ENCODE measurements at regions of chr17 and their contacts with region 1.

Region 1: DNA sequence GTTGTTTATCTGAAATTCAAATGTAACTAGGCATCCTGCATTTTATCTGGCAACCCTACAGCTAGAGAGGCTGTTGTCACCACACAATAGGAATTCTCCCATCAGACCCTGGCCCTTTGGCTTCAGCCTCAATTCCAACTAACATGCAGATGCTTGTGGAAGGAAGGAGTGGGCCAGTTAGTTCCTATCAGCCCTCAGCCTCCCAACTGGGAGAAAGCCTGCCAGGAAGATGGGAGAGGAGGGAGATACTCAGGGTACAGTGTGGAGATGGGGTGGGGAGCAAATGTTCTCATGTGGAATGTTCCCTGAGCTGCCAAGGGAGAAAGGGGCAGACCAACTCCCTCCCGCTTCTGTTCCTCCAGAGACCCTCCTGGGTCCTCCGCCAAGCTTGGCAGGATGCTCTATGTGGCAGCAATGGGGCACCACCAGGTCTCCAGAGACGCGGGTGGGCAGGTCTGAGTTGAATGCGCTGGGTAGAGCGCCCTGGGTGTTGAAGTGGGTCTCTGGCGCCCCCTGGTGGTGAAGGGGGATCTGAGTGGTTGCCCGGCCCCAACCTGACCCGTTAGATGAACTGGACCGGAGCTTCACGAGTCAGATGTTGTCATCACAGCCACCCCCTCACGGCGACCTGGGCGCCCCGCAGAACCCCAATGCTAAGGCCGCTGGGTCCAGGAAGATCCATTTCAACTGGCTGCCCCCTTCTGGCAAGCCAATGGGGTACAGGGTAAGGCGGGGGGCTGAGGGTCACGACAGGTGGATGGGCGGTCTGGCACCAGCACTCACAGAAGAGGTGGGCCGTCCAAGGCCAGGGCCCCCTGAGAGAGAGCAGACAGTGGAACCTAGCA is 15.2 kb downstream of the GALK1 start:
- DNase-seq: peak; percentile 76
- H3K4me3 Mint-ChIP-seq: no peak overlapping the region
- H3K27ac Mint-ChIP-seq: no peak overlapping the region
- H3K4me1 Mint-ChIP-seq: peaks cover 10% of the 10 kb centered on the region
- H3K27me3 Mint-ChIP-seq: peaks cover 3% of the 10 kb centered on the region

Region 2: DNA sequence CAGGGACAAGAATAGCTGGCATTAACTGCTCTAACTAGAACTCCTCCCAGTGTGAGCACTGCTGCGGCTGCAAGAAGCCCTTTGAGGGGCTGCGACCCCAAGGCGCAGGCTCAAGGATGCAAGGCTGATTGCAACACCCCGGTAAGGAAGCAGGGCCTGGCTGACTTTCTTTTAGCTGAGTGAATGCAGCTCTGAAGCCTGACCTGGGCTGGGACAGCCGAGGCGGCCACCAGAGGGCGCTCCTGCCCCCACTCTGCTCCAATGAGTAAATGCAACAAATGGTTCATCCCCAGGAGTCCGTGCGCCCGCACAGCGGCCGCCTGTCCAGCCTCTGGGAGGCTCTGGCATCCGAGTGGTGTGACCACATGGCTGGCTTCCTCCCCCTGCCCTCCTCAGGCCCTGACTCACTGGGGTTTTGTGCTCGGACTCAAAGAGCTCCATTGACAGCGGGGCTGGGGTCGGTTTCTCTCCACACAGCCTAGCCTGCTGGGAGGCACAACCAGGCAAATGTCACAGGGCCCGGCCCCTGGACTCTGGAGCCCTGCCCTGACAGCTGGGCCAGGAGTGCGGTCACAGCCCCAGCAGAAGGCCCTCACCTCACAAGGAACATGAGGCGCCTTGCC is 116.8 kb before region 1 on chr17 and contains the start of gene SMIM5:
- intact Hi-C with region 1: loop called (anchors 1 kb)
- DNase-seq: peak; percentile 75
- H3K4me3 Mint-ChIP-seq: no peak within 1 kb of the TSS
- H3K27ac Mint-ChIP-seq: no peak within 1 kb of the TSS
- H3K4me1 Mint-ChIP-seq: peaks cover 2% of the 10 kb centered on the region
- H3K27me3 Mint-ChIP-seq: no peaks in the 10 kb centered on the region
- total RNA-seq, gene SMIM5: 0.09 and 0.16 TPM in 2 replicates

Region 3: DNA sequence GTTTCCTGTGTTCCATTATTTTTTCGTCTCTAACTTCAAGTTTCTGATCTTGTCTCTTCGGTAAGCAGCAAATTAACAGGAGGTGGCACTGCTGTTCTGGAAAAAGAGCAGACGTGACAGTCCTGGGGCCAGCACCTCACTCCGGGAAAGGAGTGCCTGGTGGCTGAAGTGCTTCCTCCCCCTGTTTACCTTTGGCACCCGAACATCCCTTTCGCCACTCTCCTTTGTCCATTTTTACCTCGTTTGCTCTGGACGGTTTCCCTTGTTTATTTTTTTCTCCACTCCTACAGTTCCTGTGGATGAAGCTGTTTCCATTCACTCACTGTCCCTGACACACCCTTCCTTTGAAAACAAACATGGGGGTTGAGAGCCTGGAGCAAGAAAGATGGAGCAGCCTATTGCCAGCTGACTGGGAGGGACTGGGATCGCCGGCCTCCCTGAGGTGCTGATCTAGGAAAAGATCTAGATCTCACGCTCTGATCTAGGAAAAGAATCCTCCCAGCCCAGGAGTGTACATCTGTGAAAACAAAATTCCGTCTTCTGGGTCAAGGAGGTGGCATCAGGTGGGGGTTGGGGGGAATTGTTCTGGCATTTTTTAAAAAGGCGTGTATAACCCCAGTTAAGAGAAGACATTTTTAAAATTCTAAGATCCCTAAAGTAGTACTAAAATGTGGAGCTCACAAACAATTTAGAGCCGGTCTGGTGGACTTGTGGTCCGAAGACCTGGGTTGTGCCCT is 69.9 kb before region 1 on chr17:
- intact Hi-C with region 1: loop called (anchors 2 kb)
- DNase-seq: no peak
- H3K4me3 Mint-ChIP-seq: no peak overlapping the region
- H3K27ac Mint-ChIP-seq: no peak overlapping the region
- H3K4me1 Mint-ChIP-seq: peaks cover 12% of the 10 kb centered on the region
- H3K27me3 Mint-ChIP-seq: no peaks in the 10 kb centered on the region

Region 4: GRCh38 chr17:75707131-75707571 is 42.6 kb before region 1 on chr17:
- intact Hi-C with region 1: no loop called
- DNase-seq: no peak
- H3K4me3 Mint-ChIP-seq: no peak overlapping the region
- H3K27ac Mint-ChIP-seq: no peak overlapping the region
- H3K4me1 Mint-ChIP-seq: no peaks in the 10 kb centered on the region
- H3K27me3 Mint-ChIP-seq: peaks cover 3% of the 10 kb centered on the region

Region 5: DNA sequence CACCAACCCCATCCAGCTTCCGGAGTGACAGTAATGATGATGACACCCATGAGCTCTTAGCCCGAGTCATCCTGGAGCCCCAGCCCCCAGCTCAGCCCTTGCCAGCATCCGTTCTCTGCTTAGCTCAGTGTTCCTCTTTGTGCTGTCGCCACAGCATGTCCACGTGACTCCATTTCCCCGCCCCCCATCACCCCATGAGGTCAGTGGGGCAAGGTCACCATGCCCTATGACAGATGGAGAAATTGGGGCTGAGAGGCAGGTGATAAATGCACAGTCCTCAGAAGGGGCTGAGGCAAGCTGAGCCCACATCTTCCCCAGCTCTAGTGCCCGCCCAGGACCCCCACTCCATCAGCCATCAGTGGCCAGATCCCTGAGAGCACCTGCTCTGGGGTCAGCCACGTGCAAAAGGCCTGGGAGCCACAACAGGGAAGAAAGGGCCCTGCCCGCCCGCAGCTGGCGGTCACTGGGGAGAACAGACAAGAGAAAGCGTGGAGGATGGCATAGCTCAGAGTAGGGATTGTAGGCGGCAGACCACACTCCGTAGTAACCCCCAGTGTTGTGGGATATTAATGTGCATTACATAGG is 11.5 kb before region 1 on chr17:
- intact Hi-C with region 1: no loop called
- DNase-seq: no peak
- H3K4me3 Mint-ChIP-seq: no peak overlapping the region
- H3K27ac Mint-ChIP-seq: peak overlapping the region; percentile 76
- H3K4me1 Mint-ChIP-seq: peaks cover 7% of the 10 kb centered on the region
- H3K27me3 Mint-ChIP-seq: no peaks in the 10 kb centered on the region

Region 6: GRCh38 chr17:75779231-75779986 is 29.6 kb after region 1 on chr17:
- intact Hi-C with region 1: no loop called
- DNase-seq: peak; percentile 96
- H3K4me3 Mint-ChIP-seq: peak overlapping the region; percentile 97
- H3K27ac Mint-ChIP-seq: peak overlapping the region; percentile 98
- H3K4me1 Mint-ChIP-seq: peaks cover 37% of the 10 kb centered on the region
- H3K27me3 Mint-ChIP-seq: no peaks in the 10 kb centered on the region